AG04449 (cell line): ENCODE measurements at regions of chr6 and their contacts with region 1.

Region 1: GRCh38 chr6:43769526-43770416 is at the start of gene VEGFA:
- DNase-seq: peak; percentile 77
- H3K4me3 ChIP-seq: peak within 1 kb of the TSS; percentile 98
- CTCF ChIP-seq: peak; percentile 99

Region 2: DNA sequence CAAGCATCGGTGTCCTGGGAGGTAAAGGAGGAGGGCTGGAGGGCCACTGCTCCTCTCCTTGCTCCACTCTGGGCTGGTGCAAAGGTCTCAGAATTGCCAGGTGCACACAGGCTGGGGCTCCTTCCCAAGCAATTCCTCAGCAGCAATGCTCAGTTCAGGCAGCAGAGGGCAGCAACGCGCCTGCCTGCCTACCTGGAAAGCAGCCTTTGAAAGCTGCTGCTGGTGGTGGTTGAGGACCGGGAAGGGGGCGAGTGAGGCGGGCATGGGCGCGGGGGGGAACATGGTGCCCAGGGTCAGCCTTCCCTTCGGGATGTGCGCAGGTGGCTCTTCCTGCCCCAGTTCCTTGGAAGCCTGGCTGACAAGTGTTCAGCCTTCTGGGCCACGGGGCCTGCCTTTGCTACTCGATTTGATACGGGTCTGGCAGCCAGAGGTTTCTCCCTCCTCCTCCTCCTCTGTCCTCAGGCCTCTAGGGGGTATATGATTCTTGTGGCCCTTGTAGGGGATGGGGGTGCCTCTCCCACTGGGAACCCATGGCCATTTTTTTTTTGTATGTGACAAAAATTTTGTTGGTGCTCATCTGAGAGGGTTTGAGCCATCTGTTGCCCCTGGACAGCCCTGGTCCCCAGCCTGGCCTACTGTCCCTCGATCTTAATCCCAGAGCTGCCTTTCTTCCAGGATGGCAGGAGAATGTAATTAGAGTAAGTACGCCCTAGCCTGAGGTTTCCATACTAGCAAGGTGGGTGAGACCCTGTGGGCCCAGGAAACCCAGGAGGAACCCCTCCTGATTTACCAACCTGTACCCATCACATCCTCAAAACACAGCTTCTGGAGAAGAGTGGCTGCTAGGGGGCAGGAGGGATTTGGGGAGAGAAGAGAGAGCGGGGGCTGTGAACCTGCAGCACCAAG is 102.3 kb before region 1 on chr6:
- CTCF ChIA-PET with region 1: interaction called, 36 read pairs
- POLR2A ChIA-PET with region 1: interaction called, 9 read pairs
- DNase-seq: no peak
- H3K4me3 ChIP-seq: peak overlapping the region; percentile 36
- CTCF ChIP-seq: peak; percentile 99

Region 3: DNA sequence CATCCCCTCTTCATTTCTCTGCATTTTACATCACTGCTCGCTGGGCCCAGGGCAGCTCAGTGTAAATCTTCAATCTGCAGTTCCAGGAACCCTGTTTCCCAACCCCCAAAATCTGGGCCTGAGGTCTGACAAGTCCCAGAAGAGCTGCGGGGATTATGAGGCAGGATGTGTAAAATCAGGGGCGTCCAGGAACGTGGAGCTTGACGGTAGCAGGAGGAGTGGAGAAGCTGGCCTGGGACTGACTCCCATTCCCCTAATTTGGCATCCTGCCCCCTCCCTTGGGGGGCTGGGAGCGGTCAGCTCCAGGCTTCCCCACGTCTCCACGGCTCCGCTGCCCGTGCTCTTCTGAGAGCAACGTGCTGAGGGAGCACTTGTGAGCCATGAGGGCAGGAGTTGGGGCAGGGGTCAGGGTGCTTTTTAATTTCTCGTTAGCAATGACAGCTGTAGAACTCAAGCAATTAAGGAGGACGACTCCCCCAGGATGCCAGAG is 23.1 kb before region 1 on chr6:
- CTCF ChIA-PET with region 1: interaction called, 68 read pairs
- POLR2A ChIA-PET with region 1: interaction called, 6 read pairs
- DNase-seq: no peak
- H3K4me3 ChIP-seq: no peak overlapping the region
- CTCF ChIP-seq: no peak

Region 4: DNA sequence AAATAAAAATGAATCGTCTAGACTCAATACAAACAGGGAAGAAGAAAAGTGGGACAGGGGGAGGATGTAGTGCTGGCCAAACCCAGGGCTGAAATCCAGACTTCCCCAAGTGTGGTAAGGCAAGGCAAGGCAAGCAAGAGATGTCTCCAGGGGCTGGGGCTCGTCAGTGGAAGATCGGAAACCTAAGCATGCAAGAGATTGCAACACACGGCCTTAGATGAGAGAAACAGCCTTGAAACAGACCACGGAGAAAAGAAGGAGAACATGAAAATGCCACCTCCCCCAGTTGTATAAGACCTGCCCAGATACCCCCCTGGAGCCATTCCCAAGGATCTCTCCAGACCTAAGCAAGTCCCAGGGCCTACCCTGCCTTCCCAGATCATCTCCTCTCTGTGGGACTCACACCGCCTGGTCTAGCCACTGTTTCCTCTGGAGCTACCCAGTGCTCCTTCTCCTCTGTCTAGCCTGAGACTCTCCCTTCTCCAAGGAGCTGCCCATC is 20.3 kb after region 1 on chr6:
- CTCF ChIA-PET with region 1: interaction called, 9 read pairs
- POLR2A ChIA-PET with region 1: interaction called, 19 read pairs
- DNase-seq: no peak
- H3K4me3 ChIP-seq: no peak overlapping the region
- CTCF ChIP-seq: no peak

Region 5: GRCh38 chr6:44002593-44003344 is 233.0 kb after region 1 on chr6:
- CTCF ChIA-PET with region 1: interaction called, 20 read pairs
- POLR2A ChIA-PET with region 1: interaction called, 4 read pairs
- DNase-seq: no peak
- H3K4me3 ChIP-seq: peak overlapping the region; percentile 50
- CTCF ChIP-seq: peak; percentile 41

Region 6: GRCh38 chr6:44058617-44059358 is 289.0 kb after region 1 on chr6:
- CTCF ChIA-PET with region 1: interaction called, 8 read pairs
- POLR2A ChIA-PET with region 1: interaction called, 14 read pairs
- DNase-seq: peak; percentile 99
- H3K4me3 ChIP-seq: no peak overlapping the region
- CTCF ChIP-seq: no peak